Calu3 (cell line): ENCODE measurements at regions of chr1 and their contacts with region 1.

Region 1: GRCh38 chr1:153967082-153968000 is at the start of gene CREB3L4:
- DNase-seq: peak; percentile 92
- H3K4me3 Mint-ChIP-seq: peak within 1 kb of the TSS; percentile 90
- H3K27ac Mint-ChIP-seq: peak within 1 kb of the TSS; percentile 95
- H3K4me1 Mint-ChIP-seq: peaks cover 37% of the 10 kb centered on the region
- H3K27me3 Mint-ChIP-seq: no peaks in the 10 kb centered on the region
- CTCF ChIP-seq: no peak
- total RNA-seq, gene CREB3L4: 23.2 and 26.5 TPM in 2 replicates

Region 2: GRCh38 chr1:153192697-153193096 is 774.6 kb before region 1 on chr1:
- CTCF ChIA-PET with region 1: no interaction called
- intact Hi-C with region 1: no loop called
- DNase-seq: peak; percentile 80
- H3K4me3 Mint-ChIP-seq: no peak overlapping the region
- H3K27ac Mint-ChIP-seq: no peak overlapping the region
- H3K4me1 Mint-ChIP-seq: peaks cover 9% of the 10 kb centered on the region
- H3K27me3 Mint-ChIP-seq: peaks cover 51% of the 10 kb centered on the region
- CTCF ChIP-seq: peak; percentile 78

Region 3: GRCh38 chr1:153977250-153978240 is 10.2 kb after region 1 on chr1 and contains the start of gene JTB:
- CTCF ChIA-PET with region 1: interaction called, 27 read pairs
- intact Hi-C with region 1: no loop called
- DNase-seq: peak; percentile 90
- H3K4me3 Mint-ChIP-seq: peak within 1 kb of the TSS; percentile 94
- H3K27ac Mint-ChIP-seq: peak within 1 kb of the TSS; percentile 83
- H3K4me1 Mint-ChIP-seq: peaks cover 29% of the 10 kb centered on the region
- H3K27me3 Mint-ChIP-seq: no peaks in the 10 kb centered on the region
- CTCF ChIP-seq: no peak
- total RNA-seq, gene JTB: 105 and 115 TPM in 2 replicates

Region 4: DNA sequence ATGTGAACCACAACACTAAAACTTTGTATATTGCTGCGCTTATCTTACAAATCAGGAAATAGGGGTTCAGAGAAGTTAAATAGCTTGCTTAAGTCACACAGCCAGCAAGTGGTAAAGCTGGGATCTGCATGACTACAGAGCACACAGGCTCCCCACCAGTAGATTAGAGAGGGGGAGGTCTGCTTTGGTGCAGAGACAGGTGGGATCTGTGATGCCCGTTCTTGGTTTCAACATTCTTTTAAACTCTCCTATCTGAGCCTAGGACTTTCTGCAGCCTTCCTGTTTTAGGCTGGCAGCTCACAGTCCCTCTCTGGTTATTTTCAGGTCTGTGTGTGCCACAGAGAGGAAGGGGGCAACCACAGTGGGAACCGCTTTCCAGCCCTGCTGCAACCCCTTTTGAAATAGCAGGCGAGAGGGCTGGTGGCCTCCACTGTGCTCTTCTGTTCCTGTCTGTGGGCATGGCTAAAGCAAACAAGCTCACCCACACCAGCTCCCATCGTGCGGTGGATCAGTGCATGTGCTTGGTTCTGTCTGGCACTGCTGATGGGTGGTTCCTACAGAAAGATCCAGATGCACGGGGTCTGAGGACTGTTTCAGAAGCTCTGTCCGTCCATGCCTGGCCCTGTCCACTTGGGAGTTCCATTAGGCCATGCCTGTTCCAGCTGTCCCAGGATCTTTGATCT is 436.1 kb after region 1 on chr1:
- CTCF ChIA-PET with region 1: no interaction called
- intact Hi-C with region 1: no loop called
- DNase-seq: no peak
- H3K4me3 Mint-ChIP-seq: no peak overlapping the region
- H3K27ac Mint-ChIP-seq: no peak overlapping the region
- H3K4me1 Mint-ChIP-seq: peaks cover 23% of the 10 kb centered on the region
- H3K27me3 Mint-ChIP-seq: no peaks in the 10 kb centered on the region
- CTCF ChIP-seq: no peak